ENCODE measurements at regions of chr1 and their contacts with region 1.

Region 1: DNA sequence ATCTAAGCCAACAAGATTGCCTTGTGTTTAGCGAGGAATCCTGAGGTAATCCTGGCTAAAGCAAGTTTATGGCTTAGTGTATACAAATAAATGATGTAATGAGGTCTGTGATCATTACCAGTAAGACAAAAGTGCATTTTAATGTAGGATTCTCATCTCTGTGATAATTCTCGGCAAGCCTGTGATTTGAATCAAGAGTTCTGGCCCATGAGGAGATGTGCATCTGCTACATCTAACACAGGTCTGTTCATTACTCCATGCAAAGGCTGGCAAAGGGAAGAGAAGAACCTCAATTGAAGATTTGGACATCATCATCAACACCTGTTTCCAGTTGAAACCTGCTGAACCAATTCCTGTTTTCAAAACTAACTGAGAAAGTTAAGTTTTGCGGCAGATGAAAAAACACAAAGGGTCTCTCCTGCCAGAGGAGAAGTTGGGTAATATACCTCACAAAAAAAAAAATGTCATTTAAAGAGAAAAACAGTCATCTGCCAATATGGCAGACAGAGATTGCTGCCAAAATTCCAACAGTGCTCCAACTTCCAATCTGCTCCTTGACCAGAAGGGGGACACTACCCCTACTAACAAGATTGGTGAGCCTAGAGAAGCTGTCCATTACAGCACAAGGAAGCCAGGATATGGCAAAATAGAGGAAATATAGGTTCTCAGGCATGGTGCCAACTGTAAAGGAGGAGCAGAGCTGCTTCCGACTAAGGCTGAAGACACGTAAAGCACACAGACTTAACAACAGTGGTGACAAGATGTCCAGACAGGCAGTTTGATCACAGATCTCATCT is 453.7 kb downstream of the TTLL7 start:
- DNase-seq: no peak
- ATAC-seq: no peak
- H3K4me3 ChIP-seq: no peak overlapping the region
- H3K27ac ChIP-seq: no peak overlapping the region
- H3K4me1 ChIP-seq: no peaks in the 10 kb centered on the region
- H3K27me3 ChIP-seq: no peaks in the 10 kb centered on the region
- CTCF ChIP-seq: peak in 2 of 3 experiments; percentile 10 to 11; a peak in 1 of 6 replicates
- EP300 ChIP-seq: no peak
- POLR2A ChIP-seq: no peak
- RAD21 ChIP-seq: no peak

Region 2: DNA sequence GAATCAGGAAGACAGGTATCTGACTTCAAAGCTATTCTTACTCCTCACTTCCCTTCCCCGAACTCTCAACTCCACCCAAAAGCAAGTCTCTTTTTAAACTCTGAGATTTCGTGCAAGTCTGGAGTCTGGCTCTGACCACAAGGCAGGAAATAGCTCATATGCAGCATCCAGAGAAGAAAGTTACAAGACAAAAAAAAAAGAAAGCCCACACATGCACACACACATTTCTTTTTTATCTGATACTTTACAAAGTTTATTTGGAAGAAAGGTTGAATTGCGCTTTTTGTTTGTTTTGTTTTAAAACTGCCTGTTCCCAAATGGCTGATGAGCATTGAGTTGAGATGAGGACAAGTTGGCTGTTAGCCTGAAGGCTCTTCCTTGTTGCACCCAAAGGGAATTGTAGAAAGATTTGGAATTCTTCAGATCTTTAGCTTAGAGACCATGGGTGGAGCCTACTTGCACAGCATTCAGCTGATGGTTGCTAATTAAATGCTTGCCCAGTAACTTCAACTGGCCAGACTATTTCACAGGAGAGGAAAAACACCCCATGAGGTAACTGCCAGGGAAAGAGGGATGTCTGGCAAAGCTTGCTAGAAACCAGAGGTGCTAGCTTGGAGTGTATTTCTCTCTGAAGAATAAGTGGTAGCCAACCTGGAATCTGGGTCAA is 36.6 kb before region 1 on chr1:
- CTCF ChIA-PET with region 1: no interaction called
- POLR2A ChIA-PET with region 1: no interaction called
- RAD21 ChIA-PET with region 1: no interaction called
- SMC1A ChIA-PET with region 1: no interaction called
- in situ Hi-C with region 1: no loop called
- intact Hi-C with region 1: no loop called
- DNase-seq: peak; percentile 78
- ATAC-seq: peak; percentile 95
- H3K4me3 ChIP-seq: peak overlapping the region; percentile 37; the same call in 1 of the 2 replicates
- H3K27ac ChIP-seq: peak overlapping the region; percentile 80
- H3K4me1 ChIP-seq: peaks cover 19% of the 10 kb centered on the region
- H3K27me3 ChIP-seq: no peaks in the 10 kb centered on the region
- CTCF ChIP-seq: no peak
- EP300 ChIP-seq: peak; percentile 70 to 84; a peak in 3 of 4 replicates
- POLR2A ChIP-seq: no peak
- RAD21 ChIP-seq: peak; percentile 40

Region 3: GRCh38 chr1:83520797-83521196 is 24.5 kb before region 1 on chr1:
- CTCF ChIA-PET with region 1: no interaction called
- POLR2A ChIA-PET with region 1: no interaction called
- RAD21 ChIA-PET with region 1: no interaction called
- SMC1A ChIA-PET with region 1: interaction called, 4 read pairs
- in situ Hi-C with region 1: no loop called
- intact Hi-C with region 1: loop called (anchors 1 kb)
- DNase-seq: no peak
- ATAC-seq: peak; percentile 54
- H3K4me3 ChIP-seq: no peak overlapping the region
- H3K27ac ChIP-seq: no peak overlapping the region
- H3K4me1 ChIP-seq: no peaks in the 10 kb centered on the region
- H3K27me3 ChIP-seq: no peaks in the 10 kb centered on the region
- CTCF ChIP-seq: peak in 1 of 3 experiments; percentile 8; a peak in 1 of 6 replicates
- EP300 ChIP-seq: no peak
- POLR2A ChIP-seq: no peak
- RAD21 ChIP-seq: peak; percentile 39; the same call in 1 of the 2 replicates

Measured in GM12878 (cell line).